Psoas muscle (tissue), 8 donors: ENCODE measurements at regions of chr9 and their contacts with region 1.

Region 1: DNA sequence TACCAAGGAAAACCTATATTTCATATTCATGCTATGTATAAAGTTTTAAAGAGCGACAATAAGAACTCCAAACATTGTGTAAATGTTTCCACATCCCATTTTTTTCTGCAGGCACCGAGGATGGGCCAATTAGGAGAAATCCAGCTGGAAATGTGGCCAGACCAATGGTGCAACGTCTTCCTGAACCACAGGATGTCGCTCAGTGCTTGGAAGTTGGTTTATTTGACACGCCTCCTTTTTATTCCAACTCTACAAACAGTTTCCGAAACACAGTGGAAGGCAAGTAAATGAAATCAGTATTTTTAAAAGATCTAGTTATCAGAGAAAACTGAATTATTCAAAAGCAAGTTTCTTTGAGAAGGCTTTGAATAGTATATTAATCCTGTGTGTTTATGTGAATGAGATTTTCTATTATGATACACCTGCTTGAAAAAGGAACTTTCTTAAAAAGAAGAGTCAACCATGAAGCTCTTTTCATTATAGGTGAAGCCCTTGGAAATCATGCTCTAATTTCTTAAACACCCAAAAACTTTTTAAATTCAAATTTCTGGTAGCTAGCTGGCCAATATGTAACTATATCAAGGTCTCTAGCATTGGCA is 9.1 kb downstream of the TYRP1 start:
- DNase-seq: peak; percentile 28 to 46
- ATAC-seq: peak in 3 of 4 donors; percentile 46 to 76 (median 70)
- H3K4me3 ChIP-seq: no peak overlapping the region
- H3K27ac ChIP-seq: no peak overlapping the region
- H3K4me1 ChIP-seq: no peaks in the 10 kb centered on the region
- H3K27me3 ChIP-seq: no peaks in the 10 kb centered on the region
- CTCF ChIP-seq: peak; percentile 48

Region 2: DNA sequence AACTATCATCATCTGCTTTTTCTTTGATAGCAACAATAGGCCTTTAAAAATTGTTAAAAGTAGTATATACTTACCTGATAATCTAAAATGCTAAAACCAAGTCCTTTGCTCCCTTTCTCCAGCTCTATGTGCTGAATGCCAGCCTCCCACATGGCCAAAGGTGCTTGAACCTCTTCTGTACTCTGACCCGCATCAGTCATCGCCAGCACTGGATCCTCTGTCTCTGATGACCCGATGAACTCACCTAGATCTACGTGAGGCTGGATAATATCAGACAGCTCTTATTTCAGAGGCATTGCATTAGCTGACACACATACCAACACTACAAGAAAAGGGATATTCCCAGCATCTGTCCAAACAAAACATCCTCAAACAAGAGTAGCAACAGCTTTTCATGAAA is 487.8 kb after region 1 on chr9:
- intact Hi-C with region 1: loop called in 1 of 2 experiments (anchors 10 kb)
- DNase-seq: no peak
- ATAC-seq: no peak
- H3K4me3 ChIP-seq: no peak overlapping the region
- H3K27ac ChIP-seq: no peak overlapping the region
- H3K4me1 ChIP-seq: no peaks in the 10 kb centered on the region
- H3K27me3 ChIP-seq: no peaks in the 10 kb centered on the region
- CTCF ChIP-seq: no peak